OCI-LY7 (cell line): ENCODE measurements at regions of chr3 and their contacts with region 1.

Region 1: GRCh38 chr3:30553641-30554316 is 52.6 kb upstream of the TGFBR2 start:
- DNase-seq: no peak
- H3K4me3 ChIP-seq: no peak overlapping the region
- H3K27ac ChIP-seq: no peak overlapping the region
- H3K4me1 ChIP-seq: peaks cover 14% of the 10 kb centered on the region
- CTCF ChIP-seq: no peak

Region 2: DNA sequence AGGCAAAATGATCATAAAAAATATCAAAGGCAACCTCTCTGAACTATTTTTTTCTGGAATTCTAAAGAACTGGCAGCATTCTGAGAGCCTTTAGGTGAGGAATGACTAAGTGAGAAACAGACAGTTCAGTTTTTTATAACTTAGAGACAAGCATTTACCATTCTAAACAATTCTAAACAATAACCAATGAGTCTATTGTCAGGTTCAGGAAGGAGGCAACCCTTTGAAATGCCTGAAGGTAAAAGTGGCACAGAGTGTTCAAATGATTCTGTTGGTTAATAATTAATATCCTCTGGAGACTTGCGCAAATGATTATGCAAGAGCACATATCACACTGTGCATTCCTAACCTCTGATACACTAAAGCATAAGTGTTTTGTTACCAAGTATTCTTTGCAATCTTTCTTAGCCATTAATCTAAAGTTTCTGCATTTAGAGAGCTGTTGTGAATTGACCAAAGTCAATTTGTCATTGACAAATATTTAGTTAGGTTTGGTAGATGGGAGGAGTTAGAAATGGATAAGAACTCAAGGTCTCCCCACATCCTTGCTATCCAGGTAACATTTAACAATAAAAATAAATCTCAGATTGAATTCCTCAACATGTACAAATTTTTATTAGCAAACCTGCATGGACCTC is 43.5 kb after region 1 on chr3:
- CTCF ChIA-PET with region 1: no interaction called
- POLR2A ChIA-PET with region 1: interaction called, 3 read pairs
- intact Hi-C with region 1: loop called (anchors 5 kb)
- DNase-seq: no peak
- H3K4me3 ChIP-seq: no peak overlapping the region
- H3K27ac ChIP-seq: no peak overlapping the region
- H3K4me1 ChIP-seq: peaks cover 49% of the 10 kb centered on the region
- CTCF ChIP-seq: no peak